Activated CD4-positive, alpha-beta T cell treated with anti-CD3 and anti-CD28 coated beads for 36 hours (primary cell): ENCODE measurements at regions of chr9 and their contacts with region 1.

Region 1: GRCh38 chr9:96555567-96556386 is 63.9 kb downstream of the CDC14B start:
- DNase-seq: no peak
- ATAC-seq: no peak
- H3K4me3 Mint-ChIP-seq: no peak overlapping the region
- H3K27ac Mint-ChIP-seq: no peak overlapping the region
- H3K4me1 Mint-ChIP-seq: peaks cover 46% of the 10 kb centered on the region
- H3K27me3 Mint-ChIP-seq: peaks cover 2% of the 10 kb centered on the region

Region 2: GRCh38 chr9:95533996-95534680 is 1021.6 kb before region 1 on chr9:
- CTCF ChIA-PET with region 1: no interaction called
- POLR2A ChIA-PET with region 1: no interaction called
- intact Hi-C with region 1: no loop called
- DNase-seq: no peak
- ATAC-seq: no peak
- H3K4me3 Mint-ChIP-seq: no peak overlapping the region
- H3K27ac Mint-ChIP-seq: no peak overlapping the region
- H3K4me1 Mint-ChIP-seq: no peaks in the 10 kb centered on the region
- H3K27me3 Mint-ChIP-seq: peaks cover 11% of the 10 kb centered on the region

Region 3: GRCh38 chr9:96441798-96442445 is 113.9 kb before region 1 on chr9:
- CTCF ChIA-PET with region 1: no interaction called
- POLR2A ChIA-PET with region 1: no interaction called
- intact Hi-C with region 1: loop called in 1 of 2 experiments (anchors 1 kb)
- DNase-seq: peak; percentile 28
- ATAC-seq: peak; percentile 65
- H3K4me3 Mint-ChIP-seq: no peak overlapping the region
- H3K27ac Mint-ChIP-seq: no peak overlapping the region
- H3K4me1 Mint-ChIP-seq: no peaks in the 10 kb centered on the region
- H3K27me3 Mint-ChIP-seq: no peaks in the 10 kb centered on the region

Region 4: DNA sequence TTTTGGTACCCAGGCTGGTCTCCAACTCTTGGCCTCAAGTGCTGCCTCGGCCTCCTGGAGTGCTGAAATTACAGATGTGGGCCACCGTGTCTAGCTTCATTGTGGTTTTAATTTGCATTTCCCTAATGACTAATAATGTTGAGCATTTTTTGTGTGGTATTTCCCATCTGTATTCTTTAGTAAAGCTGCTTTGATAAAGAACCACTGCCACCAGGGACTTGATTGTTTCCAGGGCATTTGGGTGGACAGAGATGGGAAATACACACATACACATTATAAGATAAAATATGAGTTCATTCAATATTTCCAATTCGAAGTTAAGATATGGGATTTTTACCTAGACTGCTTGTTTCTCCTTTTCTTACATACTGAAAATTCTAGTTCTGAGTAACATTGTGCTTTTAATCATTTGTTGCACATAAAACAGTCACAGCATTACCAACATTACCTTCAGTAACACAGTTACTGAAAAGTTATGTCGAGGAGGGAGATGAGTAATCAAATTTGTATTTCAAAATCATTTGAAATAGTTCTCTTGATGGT is 76.9 kb before region 1 on chr9:
- CTCF ChIA-PET with region 1: no interaction called
- POLR2A ChIA-PET with region 1: interaction called, 4 read pairs
- intact Hi-C with region 1: loop called (anchors 1 to 5 kb)
- DNase-seq: peak; percentile 59
- ATAC-seq: peak; percentile 83
- H3K4me3 Mint-ChIP-seq: no peak overlapping the region
- H3K27ac Mint-ChIP-seq: peak overlapping the region; percentile 72
- H3K4me1 Mint-ChIP-seq: peaks cover 28% of the 10 kb centered on the region
- H3K27me3 Mint-ChIP-seq: no peaks in the 10 kb centered on the region